Mammary epithelial cell (primary cell): ENCODE measurements at regions of chr12 and their contacts with region 1.

Region 1: DNA sequence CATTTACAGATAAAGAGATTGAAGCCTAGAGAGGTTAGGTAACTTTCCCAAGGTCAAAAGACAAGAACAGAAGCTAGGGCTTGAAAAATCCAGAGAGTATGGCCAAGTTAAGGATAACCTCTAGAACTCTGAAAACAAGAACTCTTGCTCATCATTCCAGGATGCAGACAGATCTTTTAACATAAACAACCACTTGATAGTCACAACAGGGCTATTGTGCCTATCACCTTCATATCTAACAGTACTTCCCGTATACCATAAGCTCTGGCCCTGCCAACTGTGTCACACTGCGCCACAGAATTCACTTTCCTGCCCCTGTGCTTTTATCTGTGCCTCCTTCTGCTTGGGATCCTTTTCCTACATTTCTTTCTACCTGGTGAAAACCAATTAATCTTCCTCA is 18.2 kb downstream of the ERP29 start:
- DNase-seq: no peak
- H3K4me3 ChIP-seq: no peak overlapping the region
- H3K27ac ChIP-seq: no peak overlapping the region
- H3K4me1 ChIP-seq: no peaks in the 10 kb centered on the region
- H3K27me3 ChIP-seq: no peaks in the 10 kb centered on the region
- CTCF ChIP-seq: no peak

Region 2: DNA sequence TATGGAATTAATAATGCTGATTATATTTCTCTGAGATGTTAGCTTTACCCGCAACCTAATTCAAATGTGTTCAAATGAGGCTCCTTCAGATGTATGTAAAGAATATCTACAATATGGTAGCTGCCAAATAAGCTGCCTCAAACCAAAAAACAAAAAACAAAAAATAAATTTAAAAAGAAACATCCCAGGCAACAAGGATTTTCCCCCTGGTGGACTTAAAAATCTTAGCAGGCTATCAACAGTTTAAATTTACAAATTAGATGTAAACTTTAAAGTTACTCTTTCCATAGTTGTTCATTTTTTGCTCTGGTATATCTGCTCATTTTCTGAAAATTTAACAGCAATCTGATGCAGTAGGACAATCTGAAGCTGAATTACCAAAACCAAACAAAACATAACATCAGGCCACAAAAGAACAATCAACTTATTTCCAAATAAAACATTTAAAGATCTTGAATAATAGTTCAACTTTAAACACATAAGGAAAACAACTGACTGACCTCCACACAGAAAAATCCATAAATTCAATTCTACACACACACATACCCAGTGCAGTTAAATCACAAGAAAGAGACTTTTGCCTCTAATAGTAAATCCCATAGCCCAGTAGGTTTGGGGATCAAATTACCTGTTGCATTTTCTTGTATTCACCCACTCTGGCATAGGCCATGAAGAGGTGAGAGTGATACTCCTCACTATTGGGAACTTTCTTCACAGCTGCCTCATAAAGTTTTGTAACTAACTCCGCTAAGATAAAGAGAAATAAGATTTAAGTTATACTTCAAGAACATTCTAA is 55.8 kb after region 1 on chr12:
- CTCF ChIA-PET with region 1: no interaction called
- dilution Hi-C with region 1: no loop called
- in situ Hi-C with region 1: no loop called
- intact Hi-C with region 1: loop called (anchors 10 kb)
- DNase-seq: no peak
- H3K4me3 ChIP-seq: no peak overlapping the region
- H3K27ac ChIP-seq: no peak overlapping the region
- H3K4me1 ChIP-seq: no peaks in the 10 kb centered on the region
- H3K27me3 ChIP-seq: no peaks in the 10 kb centered on the region
- CTCF ChIP-seq: no peak

Region 3: DNA sequence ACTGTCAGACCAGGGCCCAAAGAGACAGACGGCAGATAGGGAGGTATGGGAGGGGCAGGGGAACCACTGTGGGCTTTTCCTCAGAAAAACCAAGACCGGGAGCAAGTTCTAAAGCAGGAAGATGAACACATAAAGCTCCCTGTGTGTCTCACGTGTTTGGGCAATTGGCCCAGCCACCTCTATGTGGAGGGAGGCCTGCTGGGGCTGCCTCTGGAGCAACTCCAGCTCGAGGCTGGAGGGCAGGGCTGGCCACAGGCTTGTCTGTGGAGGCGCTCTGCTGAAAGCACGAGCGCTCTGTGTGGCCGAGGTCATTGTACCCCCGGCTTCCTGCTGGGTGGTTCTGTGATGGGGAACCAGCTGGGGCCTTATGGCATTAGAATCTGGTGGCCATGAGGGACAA is 130.2 kb after region 1 on chr12:
- CTCF ChIA-PET with region 1: no interaction called
- dilution Hi-C with region 1: loop called (anchors 10 kb)
- in situ Hi-C with region 1: no loop called
- intact Hi-C with region 1: no loop called
- DNase-seq: no peak
- H3K4me3 ChIP-seq: no peak overlapping the region
- H3K27ac ChIP-seq: no peak overlapping the region
- H3K4me1 ChIP-seq: no peaks in the 10 kb centered on the region
- H3K27me3 ChIP-seq: no peaks in the 10 kb centered on the region
- CTCF ChIP-seq: no peak

Region 4: DNA sequence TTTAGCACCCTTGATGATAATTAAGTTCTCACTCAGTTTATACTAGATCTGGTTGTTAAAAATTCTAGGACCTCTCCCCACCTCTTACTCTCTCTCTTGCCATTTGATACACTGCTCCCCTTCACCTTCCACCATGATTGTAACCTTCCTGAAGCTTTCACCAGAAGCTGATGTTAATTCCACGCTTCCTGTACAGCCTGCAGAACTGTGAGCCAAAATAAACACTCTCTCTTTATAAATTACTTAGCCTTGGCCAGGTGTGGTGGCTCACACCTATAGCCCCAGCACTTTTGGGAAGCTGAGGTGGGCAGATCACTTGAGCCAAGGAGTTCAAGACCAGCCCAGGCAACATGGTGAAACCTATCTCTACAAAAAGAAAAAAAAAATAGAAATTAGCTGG is 361.9 kb after region 1 on chr12:
- CTCF ChIA-PET with region 1: no interaction called
- dilution Hi-C with region 1: loop called (anchors 5 kb)
- in situ Hi-C with region 1: no loop called
- intact Hi-C with region 1: no loop called
- DNase-seq: no peak
- H3K4me3 ChIP-seq: no peak overlapping the region
- H3K27ac ChIP-seq: no peak overlapping the region
- H3K4me1 ChIP-seq: no peaks in the 10 kb centered on the region
- H3K27me3 ChIP-seq: no peaks in the 10 kb centered on the region
- CTCF ChIP-seq: no peak